CD8-positive, alpha-beta T cell (primary cell): ENCODE measurements at regions of chr20 and their contacts with region 1.

Region 1: DNA sequence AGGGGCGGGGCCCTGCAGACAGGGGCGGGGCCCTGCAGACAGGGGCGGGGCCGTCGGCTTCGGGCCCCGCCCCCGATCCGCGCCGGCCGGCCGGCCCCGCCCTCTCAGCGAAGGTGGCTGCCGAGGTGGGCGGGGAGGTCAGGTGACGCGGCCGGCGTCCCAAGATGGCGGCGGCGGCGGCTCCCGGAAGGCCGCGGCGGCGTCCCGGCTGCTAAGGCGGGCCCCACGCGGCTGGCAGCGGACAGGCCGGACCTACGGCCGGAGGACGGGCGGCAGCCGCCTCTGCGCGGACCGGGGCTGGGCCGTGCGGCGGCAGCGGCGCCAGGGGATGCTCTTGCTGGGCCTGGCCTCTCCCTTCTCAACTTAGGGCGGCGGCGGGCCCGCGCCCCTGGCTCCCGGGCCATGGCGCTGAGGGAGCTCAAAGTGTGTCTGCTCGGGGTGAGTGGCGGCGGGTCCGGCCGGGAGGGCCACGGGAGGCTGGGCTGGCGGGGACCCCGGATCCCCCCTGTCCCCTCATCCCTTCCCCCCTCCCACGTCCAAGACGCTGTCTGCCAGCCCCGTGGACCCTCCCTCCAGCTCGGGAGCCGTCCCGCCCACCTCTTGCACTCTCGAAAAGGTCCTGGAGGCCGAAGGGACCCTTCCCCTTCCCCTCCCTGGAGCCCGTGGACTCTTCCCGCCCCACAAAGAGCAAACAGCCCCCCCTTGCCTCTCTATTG is at the start of gene RAB22A:
- DNase-seq: peak; percentile 55 to 92 (median 82)
- ATAC-seq: peak; percentile 61
- H3K4me3 ChIP-seq: peak within 1 kb of the TSS; percentile 72 to 77
- H3K4me3 Mint-ChIP-seq: peak within 1 kb of the TSS; percentile 91
- H3K27ac ChIP-seq: peak within 1 kb of the TSS; percentile 71 to 84
- H3K27ac Mint-ChIP-seq: peak within 1 kb of the TSS; percentile 96
- H3K4me1 ChIP-seq: peaks cover 61% of the 10 kb centered on the region
- H3K4me1 Mint-ChIP-seq: peaks cover 62% of the 10 kb centered on the region
- H3K27me3 ChIP-seq: no peaks in the 10 kb centered on the region
- H3K27me3 Mint-ChIP-seq: no peaks in the 10 kb centered on the region
- CTCF ChIP-seq: no peak
- total RNA-seq, gene RAB22A: 19.0 to 22.8 TPM

Region 2: GRCh38 chr20:56392282-56393137 is 1917.2 kb before region 1 on chr20 and contains the start of gene CSTF1:
- CTCF ChIA-PET with region 1: no interaction called
- POLR2A ChIA-PET with region 1: no interaction called
- intact Hi-C with region 1: loop called in 1 of 2 experiments (anchors 5 kb)
- DNase-seq: peak; percentile 98 to 99 (median 99)
- ATAC-seq: peak; percentile 84
- H3K4me3 ChIP-seq: peak within 1 kb of the TSS; percentile 91
- H3K4me3 Mint-ChIP-seq: no peak within 1 kb of the TSS
- H3K27ac ChIP-seq: peak within 1 kb of the TSS; percentile 95 to 97
- H3K27ac Mint-ChIP-seq: no peak within 1 kb of the TSS
- H3K4me1 ChIP-seq: peaks cover 17% of the 10 kb centered on the region
- H3K4me1 Mint-ChIP-seq: peaks cover 27% of the 10 kb centered on the region
- H3K27me3 ChIP-seq: no peaks in the 10 kb centered on the region
- H3K27me3 Mint-ChIP-seq: no peaks in the 10 kb centered on the region
- CTCF ChIP-seq: no peak
- total RNA-seq, gene CSTF1: 20.7 to 26.0 TPM

Region 3: GRCh38 chr20:57622579-57623377 is 687.0 kb before region 1 on chr20:
- CTCF ChIA-PET with region 1: no interaction called
- POLR2A ChIA-PET with region 1: no interaction called
- intact Hi-C with region 1: loop called (anchors 2 to 10 kb)
- DNase-seq: peak; percentile 52 to 80 (median 76)
- ATAC-seq: peak; percentile 34
- H3K4me3 ChIP-seq: no peak overlapping the region
- H3K4me3 Mint-ChIP-seq: peak overlapping the region; percentile 57
- H3K27ac ChIP-seq: no peak overlapping the region
- H3K27ac Mint-ChIP-seq: peak overlapping the region; percentile 84
- H3K4me1 ChIP-seq: peaks cover 73% of the 10 kb centered on the region
- H3K4me1 Mint-ChIP-seq: peaks cover 78% of the 10 kb centered on the region
- H3K27me3 ChIP-seq: no peaks in the 10 kb centered on the region
- H3K27me3 Mint-ChIP-seq: no peaks in the 10 kb centered on the region
- CTCF ChIP-seq: peak; percentile 72

Region 4: DNA sequence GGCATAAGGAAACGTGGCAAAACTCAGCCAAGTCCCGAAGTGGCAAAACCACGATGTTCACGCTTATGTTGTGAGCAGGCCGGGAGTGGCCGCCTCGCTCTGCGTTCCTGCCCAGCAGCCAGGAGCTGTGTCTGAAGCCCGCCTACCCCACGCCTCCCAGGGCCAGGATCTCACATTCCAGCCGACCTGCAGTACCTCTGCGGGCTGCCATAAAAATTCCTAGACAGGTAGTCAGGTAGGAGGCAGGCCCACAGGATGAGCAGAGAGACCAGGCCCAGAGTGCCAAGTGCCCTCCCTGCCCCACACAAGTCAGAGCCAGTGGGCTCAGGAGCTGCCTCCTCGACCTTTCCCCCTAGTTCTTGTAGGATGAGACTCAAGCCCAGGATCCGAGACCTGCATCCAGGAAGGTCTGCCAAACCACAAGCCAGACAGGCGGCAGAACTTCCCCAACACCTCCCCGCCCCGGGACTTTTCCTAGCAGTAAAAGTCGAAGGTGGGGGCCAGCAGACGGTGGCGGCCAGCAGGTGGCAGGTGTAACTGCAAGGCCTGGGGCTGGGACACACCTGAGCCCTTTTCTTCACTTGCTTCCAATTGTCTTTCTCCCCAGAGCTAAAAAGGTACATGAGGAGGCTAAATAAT is 616.6 kb before region 1 on chr20:
- CTCF ChIA-PET with region 1: no interaction called
- POLR2A ChIA-PET with region 1: no interaction called
- intact Hi-C with region 1: no loop called
- DNase-seq: peak in 3 of 9 experiments; percentile 28 to 40 (median 35)
- ATAC-seq: no peak
- H3K4me3 ChIP-seq: no peak overlapping the region
- H3K4me3 Mint-ChIP-seq: no peak overlapping the region
- H3K27ac ChIP-seq: no peak overlapping the region
- H3K27ac Mint-ChIP-seq: no peak overlapping the region
- H3K4me1 ChIP-seq: no peaks in the 10 kb centered on the region
- H3K4me1 Mint-ChIP-seq: peaks cover 8% of the 10 kb centered on the region
- H3K27me3 ChIP-seq: no peaks in the 10 kb centered on the region
- H3K27me3 Mint-ChIP-seq: no peaks in the 10 kb centered on the region
- CTCF ChIP-seq: peak; percentile 17

Region 5: GRCh38 chr20:57928181-57928580 is 381.6 kb before region 1 on chr20:
- CTCF ChIA-PET with region 1: no interaction called
- POLR2A ChIA-PET with region 1: no interaction called
- intact Hi-C with region 1: no loop called
- DNase-seq: no peak
- ATAC-seq: no peak
- H3K4me3 ChIP-seq: no peak overlapping the region
- H3K4me3 Mint-ChIP-seq: no peak overlapping the region
- H3K27ac ChIP-seq: no peak overlapping the region
- H3K27ac Mint-ChIP-seq: no peak overlapping the region
- H3K4me1 ChIP-seq: no peaks in the 10 kb centered on the region
- H3K4me1 Mint-ChIP-seq: no peaks in the 10 kb centered on the region
- H3K27me3 ChIP-seq: no peaks in the 10 kb centered on the region
- H3K27me3 Mint-ChIP-seq: peaks cover 10% of the 10 kb centered on the region
- CTCF ChIP-seq: no peak

Region 6: GRCh38 chr20:58236612-58237330 is 73.0 kb before region 1 on chr20:
- CTCF ChIA-PET with region 1: interaction called, 7 read pairs
- POLR2A ChIA-PET with region 1: interaction called, 6 read pairs
- intact Hi-C with region 1: loop called (anchors 1 to 2 kb)
- DNase-seq: peak; percentile 70 to 91 (median 82)
- ATAC-seq: peak; percentile 87
- H3K4me3 ChIP-seq: peak overlapping the region; percentile 53 to 85
- H3K4me3 Mint-ChIP-seq: peak overlapping the region; percentile 86
- H3K27ac ChIP-seq: peak overlapping the region; percentile 56 to 73
- H3K27ac Mint-ChIP-seq: peak overlapping the region; percentile 89
- H3K4me1 ChIP-seq: peaks cover 7% of the 10 kb centered on the region
- H3K4me1 Mint-ChIP-seq: peaks cover 19% of the 10 kb centered on the region
- H3K27me3 ChIP-seq: no peaks in the 10 kb centered on the region
- H3K27me3 Mint-ChIP-seq: no peaks in the 10 kb centered on the region
- CTCF ChIP-seq: peak; percentile 96

Region 7: GRCh38 chr20:58402827-58403226 is 93.1 kb after region 1 on chr20:
- CTCF ChIA-PET with region 1: no interaction called
- POLR2A ChIA-PET with region 1: no interaction called
- intact Hi-C with region 1: no loop called
- DNase-seq: no peak
- ATAC-seq: no peak
- H3K4me3 ChIP-seq: no peak overlapping the region
- H3K4me3 Mint-ChIP-seq: no peak overlapping the region
- H3K27ac ChIP-seq: no peak overlapping the region
- H3K27ac Mint-ChIP-seq: no peak overlapping the region
- H3K4me1 ChIP-seq: peaks cover 48% of the 10 kb centered on the region
- H3K4me1 Mint-ChIP-seq: peaks cover 41% of the 10 kb centered on the region
- H3K27me3 ChIP-seq: no peaks in the 10 kb centered on the region
- H3K27me3 Mint-ChIP-seq: no peaks in the 10 kb centered on the region
- CTCF ChIP-seq: no peak

Region 8: DNA sequence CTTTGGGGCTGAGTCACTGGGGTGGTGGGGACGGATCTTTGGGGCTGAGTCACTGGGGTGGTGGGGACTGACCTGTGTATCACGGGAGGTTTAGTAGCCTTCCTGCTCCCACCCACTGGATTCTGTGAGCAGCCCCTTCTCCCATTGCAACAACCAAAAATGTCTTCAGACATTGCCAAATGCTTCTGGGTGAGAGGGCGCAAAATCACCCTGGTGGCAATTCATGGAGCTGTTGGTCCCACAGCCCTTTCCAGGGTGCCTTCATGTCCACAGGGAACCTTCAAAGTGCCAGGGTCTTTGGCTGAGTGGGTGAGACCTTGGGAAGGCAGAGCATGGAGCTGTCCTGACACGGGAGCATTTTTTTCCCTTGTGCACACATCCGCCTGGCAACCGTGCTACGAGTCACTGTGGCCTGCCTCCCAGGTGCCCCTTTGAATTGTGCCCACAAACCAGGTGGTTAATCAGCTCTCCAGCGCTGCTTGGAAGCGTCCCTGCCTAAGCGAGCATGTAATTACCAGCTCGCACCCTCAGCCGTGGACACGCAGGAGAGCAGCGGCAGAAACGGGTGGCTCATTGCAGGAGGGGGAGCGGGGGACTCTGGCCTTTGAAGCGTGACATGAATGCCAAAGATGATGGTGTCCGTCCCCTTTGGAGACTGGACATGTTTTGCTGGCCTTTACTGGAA is 232.8 kb after region 1 on chr20:
- CTCF ChIA-PET with region 1: no interaction called
- POLR2A ChIA-PET with region 1: no interaction called
- intact Hi-C with region 1: no loop called
- DNase-seq: no peak
- ATAC-seq: no peak
- H3K4me3 ChIP-seq: no peak overlapping the region
- H3K4me3 Mint-ChIP-seq: no peak overlapping the region
- H3K27ac ChIP-seq: no peak overlapping the region
- H3K27ac Mint-ChIP-seq: no peak overlapping the region
- H3K4me1 ChIP-seq: no peaks in the 10 kb centered on the region
- H3K4me1 Mint-ChIP-seq: no peaks in the 10 kb centered on the region
- H3K27me3 ChIP-seq: no peaks in the 10 kb centered on the region
- H3K27me3 Mint-ChIP-seq: peaks cover 7% of the 10 kb centered on the region
- CTCF ChIP-seq: no peak

Region 9: DNA sequence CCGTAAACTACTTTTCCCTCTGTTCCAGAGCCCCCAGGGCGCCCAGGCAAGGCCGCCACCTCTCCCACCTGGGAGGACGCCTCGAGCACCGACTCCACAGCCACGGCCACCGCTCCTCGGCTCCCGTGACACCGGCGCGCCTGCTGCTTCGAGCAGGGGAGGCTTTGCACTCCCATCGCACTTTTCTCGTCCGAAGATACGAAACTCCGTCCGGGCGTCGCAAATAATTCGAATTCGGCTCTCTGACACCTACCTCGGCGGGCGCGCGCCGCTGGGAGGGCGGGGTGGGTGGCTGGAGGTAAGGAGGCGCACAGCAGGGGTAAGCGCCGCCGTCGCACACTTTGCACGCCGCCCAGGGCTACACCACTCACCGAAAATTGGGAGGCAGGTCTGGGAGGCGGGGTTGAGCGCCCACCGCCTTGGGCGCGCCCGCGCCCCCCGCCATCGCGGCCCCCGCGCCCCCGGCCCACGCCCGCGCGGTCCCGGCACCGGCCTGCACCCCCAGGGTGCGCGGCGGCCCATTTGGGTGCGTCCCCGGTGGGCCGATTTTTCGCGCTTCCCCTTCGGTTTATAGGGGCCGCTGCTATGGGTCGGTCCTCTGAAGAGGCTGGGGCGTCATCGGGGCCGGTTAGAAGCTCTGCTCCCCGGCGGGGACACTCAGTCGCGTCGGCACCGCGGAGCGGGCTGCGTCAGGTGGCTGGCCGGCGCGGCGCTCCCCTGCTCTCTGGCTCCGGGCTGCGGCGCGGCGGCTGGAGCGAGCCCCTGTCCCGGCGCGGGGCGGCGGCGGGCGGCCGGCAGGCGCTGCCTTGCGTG is 579.0 kb after region 1 on chr20:
- CTCF ChIA-PET with region 1: no interaction called
- POLR2A ChIA-PET with region 1: no interaction called
- intact Hi-C with region 1: loop called in 1 of 2 experiments (anchors 5 kb)
- DNase-seq: peak; percentile 69 to 92 (median 82)
- ATAC-seq: peak; percentile 49
- H3K4me3 ChIP-seq: peak overlapping the region; percentile 66 to 72
- H3K4me3 Mint-ChIP-seq: peak overlapping the region; percentile 83
- H3K27ac ChIP-seq: peak overlapping the region; percentile 79 to 95
- H3K27ac Mint-ChIP-seq: peak overlapping the region; percentile 92
- H3K4me1 ChIP-seq: peaks cover 14% of the 10 kb centered on the region
- H3K4me1 Mint-ChIP-seq: peaks cover 35% of the 10 kb centered on the region
- H3K27me3 ChIP-seq: no peaks in the 10 kb centered on the region
- H3K27me3 Mint-ChIP-seq: no peaks in the 10 kb centered on the region
- CTCF ChIP-seq: no peak

Region 10: GRCh38 chr20:59149651-59150504 is 840.1 kb after region 1 on chr20:
- CTCF ChIA-PET with region 1: no interaction called
- POLR2A ChIA-PET with region 1: no interaction called
- intact Hi-C with region 1: loop called (anchors 10 kb)
- DNase-seq: peak; percentile 66 to 96 (median 77)
- ATAC-seq: peak; percentile 74
- H3K4me3 ChIP-seq: peak overlapping the region in 1 of 2 experiments; percentile 21
- H3K4me3 Mint-ChIP-seq: peak overlapping the region; percentile 71
- H3K27ac ChIP-seq: peak overlapping the region; percentile 90 to 94
- H3K27ac Mint-ChIP-seq: peak overlapping the region; percentile 95
- H3K4me1 ChIP-seq: peaks cover 94% of the 10 kb centered on the region
- H3K4me1 Mint-ChIP-seq: peaks cover 94% of the 10 kb centered on the region
- H3K27me3 ChIP-seq: no peaks in the 10 kb centered on the region
- H3K27me3 Mint-ChIP-seq: no peaks in the 10 kb centered on the region
- CTCF ChIP-seq: no peak

Region 11: DNA sequence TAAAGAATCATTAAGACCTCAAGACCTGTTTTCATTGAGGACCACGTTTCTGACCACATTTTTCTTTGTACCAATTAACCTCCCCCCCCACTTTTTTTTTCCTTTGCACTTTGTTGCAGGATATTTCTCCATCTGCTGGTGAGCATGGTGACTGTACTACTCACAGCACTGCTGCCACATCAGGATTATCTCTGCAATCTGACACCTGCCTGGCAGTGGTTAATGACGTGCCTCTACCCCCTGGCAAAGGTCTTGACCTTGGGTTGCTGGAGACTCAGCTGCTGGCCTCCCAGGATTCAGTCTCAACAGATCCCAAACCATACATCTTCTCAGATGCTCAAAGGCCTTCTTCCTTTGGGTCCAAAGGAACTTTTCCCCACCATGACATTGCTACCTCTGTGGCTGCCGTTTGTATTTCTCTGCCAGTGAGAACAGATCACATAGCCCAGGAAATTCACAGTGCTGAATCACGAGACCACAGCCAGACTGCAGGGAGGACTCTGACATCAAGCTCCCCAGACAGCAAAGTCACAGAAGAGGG is 944.1 kb after region 1 on chr20:
- CTCF ChIA-PET with region 1: no interaction called
- POLR2A ChIA-PET with region 1: no interaction called
- intact Hi-C with region 1: loop called in 1 of 2 experiments (anchors 5 kb)
- DNase-seq: peak in 7 of 9 experiments; percentile 26 to 70 (median 40)
- ATAC-seq: peak; percentile 61
- H3K4me3 ChIP-seq: peak overlapping the region in 1 of 2 experiments; percentile 18
- H3K4me3 Mint-ChIP-seq: peak overlapping the region; percentile 75
- H3K27ac ChIP-seq: peak overlapping the region; percentile 57 to 59
- H3K27ac Mint-ChIP-seq: peak overlapping the region; percentile 98
- H3K4me1 ChIP-seq: peaks cover 53% of the 10 kb centered on the region
- H3K4me1 Mint-ChIP-seq: peaks cover 74% of the 10 kb centered on the region
- H3K27me3 ChIP-seq: no peaks in the 10 kb centered on the region
- H3K27me3 Mint-ChIP-seq: no peaks in the 10 kb centered on the region
- CTCF ChIP-seq: no peak